HEK293T (cell line): ENCODE measurements at regions of chr17 and their contacts with region 1.

Region 1: GRCh38 chr17:75109407-75110233 is at the start of gene ARMC7:
- DNase-seq: peak; percentile 95

Region 2: GRCh38 chr17:75087558-75088453 is 21.8 kb before region 1 on chr17 and contains the start of gene SLC16A5:
- CTCF ChIA-PET with region 1: interaction called, 8 read pairs
- POLR2A ChIA-PET with region 1: interaction called, 10 read pairs
- DNase-seq: peak; percentile 60

Region 3: DNA sequence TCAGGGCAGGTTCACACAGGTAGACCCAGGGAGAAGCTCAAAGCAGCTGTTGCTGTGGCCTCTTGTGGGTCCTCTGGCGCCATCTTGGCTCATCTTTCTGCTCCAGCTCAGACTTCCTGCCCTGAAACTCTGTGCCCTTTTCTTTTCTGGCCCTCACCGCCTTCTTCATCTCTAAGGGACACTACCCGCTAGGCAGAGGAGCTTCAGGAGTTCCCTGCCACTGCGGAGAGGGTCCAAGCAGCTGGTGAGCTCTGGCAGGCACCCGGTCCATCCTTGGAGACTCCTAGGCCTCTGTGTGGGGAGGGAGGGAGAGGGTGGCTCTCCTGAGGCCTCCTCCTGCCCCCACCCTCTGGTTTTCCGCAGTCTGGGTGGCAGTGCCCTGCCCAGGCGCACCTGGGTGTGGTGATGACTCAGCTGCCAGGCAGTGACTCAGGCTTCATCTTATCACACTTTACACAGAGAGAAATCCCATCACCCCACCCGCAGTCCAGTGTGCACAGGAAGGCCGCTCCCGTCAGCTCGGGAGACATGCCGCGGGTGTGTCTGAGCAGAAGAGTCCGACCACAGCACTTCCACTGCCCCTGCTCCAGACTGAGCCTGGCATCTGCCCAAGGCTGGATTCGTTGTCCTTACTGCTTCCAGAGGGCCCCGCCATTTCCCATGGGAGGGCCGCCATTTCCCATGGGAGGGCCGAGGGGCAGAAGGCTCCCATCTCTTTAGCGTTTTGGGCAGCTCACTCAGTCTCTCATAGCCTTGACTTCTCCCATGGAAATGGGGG is 14.6 kb after region 1 on chr17:
- CTCF ChIA-PET with region 1: interaction called, 32 read pairs
- POLR2A ChIA-PET with region 1: interaction called, 68 read pairs
- DNase-seq: no peak

Region 4: GRCh38 chr17:75173526-75173925 is 63.9 kb after region 1 on chr17:
- CTCF ChIA-PET with region 1: interaction called, 12 read pairs
- POLR2A ChIA-PET with region 1: interaction called, 3 read pairs
- DNase-seq: no peak

Region 5: DNA sequence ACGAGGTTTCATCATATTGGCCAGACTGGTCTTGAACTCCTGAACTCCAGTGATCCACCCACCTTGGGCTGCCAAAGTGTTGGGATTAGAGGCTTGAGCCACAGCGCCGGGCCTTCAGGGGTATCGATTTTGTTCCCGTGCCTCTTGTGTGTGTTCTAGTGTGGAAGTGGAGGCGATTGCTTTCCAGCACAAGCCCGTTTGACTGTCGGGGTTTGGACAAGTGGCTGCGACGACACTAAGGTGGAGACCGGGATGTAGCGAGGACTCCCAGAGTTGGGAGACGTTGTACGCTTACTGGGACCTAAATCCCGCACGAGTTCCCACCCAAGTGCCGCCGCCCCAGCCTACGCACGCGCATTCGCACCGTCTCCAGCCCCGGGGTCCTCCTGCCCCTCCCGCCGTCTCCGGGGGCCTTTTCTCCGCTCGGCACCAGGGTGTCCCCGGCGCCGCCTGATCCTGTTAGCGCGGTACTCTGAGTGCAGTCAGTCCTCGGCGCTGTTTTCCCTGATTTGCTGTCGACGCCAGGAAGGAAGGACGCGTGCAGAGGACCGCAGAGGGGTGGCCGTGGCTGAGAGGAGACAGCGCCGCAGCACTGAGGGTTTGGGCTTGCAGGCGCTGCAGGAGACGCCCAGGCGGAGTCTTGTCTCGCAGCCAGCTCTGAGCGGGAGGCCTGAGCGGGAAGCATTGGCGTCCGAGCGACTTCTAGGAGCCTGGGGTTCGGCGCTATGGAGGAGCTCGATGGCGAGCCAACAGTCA is 95.6 kb after region 1 on chr17 and contains the start of gene NUP85:
- CTCF ChIA-PET with region 1: interaction called, 44 read pairs
- POLR2A ChIA-PET with region 1: interaction called, 8 read pairs
- DNase-seq: peak; percentile 99